OCI-LY7 (cell line): ENCODE measurements at regions of chr6 and their contacts with region 1.

Region 1: GRCh38 chr6:15245361-15246216 is at the start of gene JARID2:
- DNase-seq: peak; percentile 95
- H3K4me3 ChIP-seq: peak within 1 kb of the TSS; percentile 80
- H3K27ac ChIP-seq: peak within 1 kb of the TSS; percentile 55
- H3K4me1 ChIP-seq: peaks cover 27% of the 10 kb centered on the region
- CTCF ChIP-seq: no peak
- total RNA-seq, gene JARID2: 18.4 and 19.0 TPM in 2 replicates

Region 2: GRCh38 chr6:14129575-14129974 is 1116.0 kb before region 1 on chr6:
- CTCF ChIA-PET with region 1: no interaction called
- POLR2A ChIA-PET with region 1: no interaction called
- intact Hi-C with region 1: loop called (anchors 5 kb)
- DNase-seq: peak; percentile 83
- H3K4me3 ChIP-seq: no peak overlapping the region
- H3K27ac ChIP-seq: no peak overlapping the region
- H3K4me1 ChIP-seq: peaks cover 43% of the 10 kb centered on the region
- CTCF ChIP-seq: peak; percentile 85

Region 3: DNA sequence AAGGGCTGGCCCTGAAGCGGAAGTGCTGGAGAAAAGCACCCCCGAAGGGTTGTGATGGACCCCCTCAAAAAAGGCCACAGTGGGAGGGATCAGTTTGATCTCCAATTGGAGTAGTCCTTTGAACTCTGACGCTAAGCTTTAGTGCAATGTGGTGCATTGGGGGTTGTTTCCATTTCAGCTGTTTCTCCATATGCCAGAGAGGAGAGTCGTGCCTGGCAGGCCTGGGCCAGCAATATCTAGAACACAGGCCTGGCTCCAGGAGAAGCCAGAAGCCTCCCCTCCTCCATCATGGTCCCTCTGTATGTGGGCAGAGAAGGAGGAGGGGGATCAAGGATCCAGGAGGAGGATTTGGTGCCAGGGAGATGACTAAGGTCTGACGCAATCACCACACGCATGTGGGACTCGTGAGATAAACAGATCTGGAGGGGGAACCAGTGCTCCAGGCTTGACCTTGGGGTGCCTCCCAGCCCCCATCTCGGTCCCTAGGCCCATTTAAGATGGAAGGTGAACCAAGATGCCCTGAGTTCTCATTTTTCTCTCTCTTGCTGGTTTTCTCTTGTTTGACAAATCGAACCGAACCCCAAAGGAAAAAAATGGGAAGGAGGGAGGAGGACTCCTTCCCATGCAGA is 517.1 kb before region 1 on chr6:
- CTCF ChIA-PET with region 1: no interaction called
- POLR2A ChIA-PET with region 1: no interaction called
- intact Hi-C with region 1: loop called (anchors 5 kb)
- DNase-seq: peak; percentile 44
- H3K4me3 ChIP-seq: peak overlapping the region; percentile 59
- H3K27ac ChIP-seq: peak overlapping the region; percentile 98
- H3K4me1 ChIP-seq: peaks cover 57% of the 10 kb centered on the region
- CTCF ChIP-seq: no peak

Region 4: GRCh38 chr6:14758421-14759081 is 487.0 kb before region 1 on chr6:
- CTCF ChIA-PET with region 1: no interaction called
- POLR2A ChIA-PET with region 1: no interaction called
- intact Hi-C with region 1: no loop called
- DNase-seq: no peak
- H3K4me3 ChIP-seq: no peak overlapping the region
- H3K27ac ChIP-seq: no peak overlapping the region
- H3K4me1 ChIP-seq: peaks cover 4% of the 10 kb centered on the region
- CTCF ChIP-seq: no peak

Region 5: GRCh38 chr6:15106958-15107643 is 138.5 kb before region 1 on chr6:
- CTCF ChIA-PET with region 1: no interaction called
- POLR2A ChIA-PET with region 1: no interaction called
- intact Hi-C with region 1: no loop called
- DNase-seq: no peak
- H3K4me3 ChIP-seq: no peak overlapping the region
- H3K27ac ChIP-seq: no peak overlapping the region
- H3K4me1 ChIP-seq: no peaks in the 10 kb centered on the region
- CTCF ChIP-seq: no peak

Region 6: GRCh38 chr6:15389765-15390723 is 144.5 kb after region 1 on chr6:
- CTCF ChIA-PET with region 1: no interaction called
- POLR2A ChIA-PET with region 1: interaction called, 5 read pairs
- intact Hi-C with region 1: loop called (anchors 2 kb)
- DNase-seq: peak; percentile 69
- H3K4me3 ChIP-seq: no peak overlapping the region
- H3K27ac ChIP-seq: no peak overlapping the region
- H3K4me1 ChIP-seq: peaks cover 16% of the 10 kb centered on the region
- CTCF ChIP-seq: peak; percentile 86

Region 7: GRCh38 chr6:16128759-16129622 is 883.4 kb after region 1 on chr6 and contains the start of gene MYLIP:
- CTCF ChIA-PET with region 1: no interaction called
- POLR2A ChIA-PET with region 1: no interaction called
- intact Hi-C with region 1: loop called (anchors 5 kb)
- DNase-seq: peak; percentile 95
- H3K4me3 ChIP-seq: peak within 1 kb of the TSS; percentile 99
- H3K27ac ChIP-seq: peak within 1 kb of the TSS; percentile 72
- H3K4me1 ChIP-seq: peaks cover 27% of the 10 kb centered on the region
- CTCF ChIP-seq: peak; percentile 74
- total RNA-seq, gene MYLIP: 8.5 and 12.4 TPM in 2 replicates